ENCODE measurements at regions of chr17 and their contacts with region 1.

Region 1: GRCh38 chr17:46832945-46833839 is 14.7 kb upstream of the WNT3 start:
- DNase-seq: no peak
- H3K4me3 ChIP-seq: no peak overlapping the region
- H3K27ac ChIP-seq: peak overlapping the region in 1 of 2 experiments; percentile 29; a peak in 2 of 4 replicates
- H3K4me1 ChIP-seq: peaks cover 0 to 8% of the 10 kb centered on the region in 2 experiments; a peak in 2 of 4 replicates
- H3K27me3 ChIP-seq: no peaks in the 10 kb centered on the region
- CTCF ChIP-seq: no peak
- EP300 ChIP-seq: no peak
- RAD21 ChIP-seq: no peak

Region 2: GRCh38 chr17:46751425-46751824 is 81.8 kb before region 1 on chr17:
- CTCF ChIA-PET with region 1: interaction called, 10 read pairs
- POLR2A ChIA-PET with region 1: no interaction called
- DNase-seq: no peak
- H3K4me3 ChIP-seq: no peak overlapping the region
- H3K27ac ChIP-seq: no peak overlapping the region
- H3K4me1 ChIP-seq: no peaks in the 10 kb centered on the region
- H3K27me3 ChIP-seq: no peaks in the 10 kb centered on the region
- CTCF ChIP-seq: no peak
- EP300 ChIP-seq: no peak
- RAD21 ChIP-seq: no peak

Region 3: GRCh38 chr17:46776377-46777005 is 56.7 kb before region 1 on chr17:
- CTCF ChIA-PET with region 1: interaction called, 76 read pairs
- POLR2A ChIA-PET with region 1: no interaction called
- DNase-seq: peak; percentile 41
- H3K4me3 ChIP-seq: no peak overlapping the region
- H3K27ac ChIP-seq: no peak overlapping the region
- H3K4me1 ChIP-seq: peaks cover 0 to 5% of the 10 kb centered on the region in 2 experiments; a peak in 1 of 4 replicates
- H3K27me3 ChIP-seq: no peaks in the 10 kb centered on the region
- CTCF ChIP-seq: no peak
- EP300 ChIP-seq: no peak
- RAD21 ChIP-seq: no peak

Region 4: GRCh38 chr17:46796524-46796923 is 36.7 kb before region 1 on chr17:
- CTCF ChIA-PET with region 1: interaction called, 76 read pairs
- POLR2A ChIA-PET with region 1: no interaction called
- DNase-seq: no peak
- H3K4me3 ChIP-seq: no peak overlapping the region
- H3K27ac ChIP-seq: no peak overlapping the region
- H3K4me1 ChIP-seq: no peaks in the 10 kb centered on the region
- H3K27me3 ChIP-seq: peaks cover 16% of the 10 kb centered on the region; the same call in 1 of the 2 replicates
- CTCF ChIP-seq: no peak
- EP300 ChIP-seq: no peak
- RAD21 ChIP-seq: no peak

Region 5: DNA sequence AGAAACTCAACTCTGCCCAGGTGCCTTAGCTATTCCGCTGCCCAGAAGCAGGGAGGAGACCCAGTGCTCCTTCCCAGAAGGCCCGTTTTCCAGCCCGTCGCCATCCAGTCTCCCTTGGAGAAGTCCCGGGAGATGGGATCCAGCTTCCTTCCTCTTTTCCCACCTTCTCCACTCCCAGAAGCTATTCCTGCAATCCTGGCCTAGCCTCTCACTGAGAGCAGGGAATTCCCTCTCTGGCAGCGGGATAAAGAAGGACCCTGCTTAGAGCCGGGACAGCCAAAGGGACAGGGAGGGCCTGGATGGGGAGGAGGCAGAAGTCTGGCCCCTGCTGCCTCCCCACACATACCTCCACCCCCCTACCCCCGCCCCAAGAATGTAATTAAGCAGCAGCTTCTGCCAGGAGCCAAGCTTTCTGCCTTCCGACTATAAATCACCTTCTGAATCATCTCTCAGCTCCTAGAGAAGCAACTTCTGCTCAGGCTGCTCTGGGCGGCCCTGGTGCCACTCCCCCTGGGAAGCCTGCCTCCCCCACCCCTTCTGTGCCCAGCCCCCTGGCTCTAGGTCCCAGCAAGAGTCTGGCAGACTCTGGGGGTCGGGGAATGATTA is 21.1 kb before region 1 on chr17:
- CTCF ChIA-PET with region 1: interaction called, 39 read pairs
- POLR2A ChIA-PET with region 1: no interaction called
- DNase-seq: no peak
- H3K4me3 ChIP-seq: no peak overlapping the region
- H3K27ac ChIP-seq: peak overlapping the region in 1 of 2 experiments; percentile 18; a peak in 1 of 4 replicates
- H3K4me1 ChIP-seq: peaks cover 0 to 48% of the 10 kb centered on the region in 2 experiments; a peak in 1 of 4 replicates
- H3K27me3 ChIP-seq: no peaks in the 10 kb centered on the region; the same call in 1 of the 2 replicates
- CTCF ChIP-seq: no peak
- EP300 ChIP-seq: peak in 1 of 2 experiments; percentile 54; a peak in 1 of 4 replicates
- RAD21 ChIP-seq: no peak

Region 6: GRCh38 chr17:46851029-46851741 is 18.0 kb after region 1 on chr17 and contains the start of gene WNT9B:
- CTCF ChIA-PET with region 1: interaction called, 12 read pairs
- POLR2A ChIA-PET with region 1: no interaction called
- DNase-seq: peak; percentile 90
- H3K4me3 ChIP-seq: peak within 1 kb of the TSS; percentile 48 to 58
- H3K27ac ChIP-seq: no peak within 1 kb of the TSS
- H3K4me1 ChIP-seq: peaks cover 0 to 11% of the 10 kb centered on the region in 2 experiments; a peak in 1 of 4 replicates
- H3K27me3 ChIP-seq: peaks cover 54% of the 10 kb centered on the region
- CTCF ChIP-seq: peak; percentile 17; the same call in 1 of the 2 replicates
- EP300 ChIP-seq: no peak
- RAD21 ChIP-seq: no peak
- polyA plus RNA-seq, gene WNT9B: not detected in 2 replicates